Activated T-helper 1 cell treated with anti-CD3 and anti-CD28 coated beads, Interleukin-12 subunit alpha, Interleukin-12 subunit beta, Interleukin-2, Interleukin-4 antibody, amounts not matched to agents 30 ng/mL and 10 ng/mL and 1 ng/mL, durations not matched to agents 14 hours and 24 hours and 36 hours (primary cell): ENCODE measurements at regions of chr14 and their contacts with region 1.

Region 1: DNA sequence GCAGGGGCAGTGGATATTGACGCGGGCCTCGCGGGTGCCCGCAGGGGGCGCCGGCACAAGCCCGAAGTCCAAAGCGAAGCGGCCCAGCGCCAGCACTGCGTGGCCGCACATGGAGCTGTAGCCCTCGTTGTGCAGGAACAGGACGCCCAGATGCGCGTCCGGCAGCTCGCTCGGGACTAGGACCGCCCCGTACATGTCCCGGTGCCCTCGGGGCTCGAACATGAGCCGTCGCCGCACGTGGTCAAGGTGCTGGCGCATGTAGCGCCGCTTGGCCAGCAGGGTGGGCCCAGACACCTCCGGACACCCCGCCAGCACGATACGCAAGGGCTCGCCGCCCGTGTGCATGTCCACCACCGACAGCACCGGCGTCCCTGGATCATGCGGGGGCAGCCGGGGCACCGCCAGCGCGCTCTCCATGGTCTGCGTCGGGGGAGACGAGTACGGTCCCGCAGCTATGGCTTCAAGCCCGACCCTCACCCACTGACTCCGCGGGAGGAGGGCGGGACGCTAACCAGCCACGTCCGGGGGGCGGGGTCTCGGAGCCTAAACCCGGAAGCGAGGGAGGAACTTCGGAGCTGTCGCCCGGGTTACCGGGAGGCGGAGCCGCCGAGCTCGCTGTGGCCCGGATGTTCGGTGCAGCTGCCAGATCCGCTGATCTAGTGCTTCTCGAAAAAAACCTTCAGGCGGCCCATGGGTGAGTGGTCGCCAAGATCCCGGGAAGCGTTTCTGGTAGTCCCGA is at the starts of genes JKAMP and L3HYPDH:
- DNase-seq: peak; percentile 95
- H3K4me3 Mint-ChIP-seq: peak within 1 kb of the TSS; percentile 94
- H3K27ac Mint-ChIP-seq: peak within 1 kb of the TSS; percentile 90
- H3K4me1 Mint-ChIP-seq: peaks cover 61% of the 10 kb centered on the region
- H3K27me3 Mint-ChIP-seq: no peaks in the 10 kb centered on the region
- total RNA-seq, gene JKAMP: 27.6 and 28.8 TPM in 2 replicates
- total RNA-seq, gene L3HYPDH: 14.0 and 15.9 TPM in 2 replicates

Region 2: DNA sequence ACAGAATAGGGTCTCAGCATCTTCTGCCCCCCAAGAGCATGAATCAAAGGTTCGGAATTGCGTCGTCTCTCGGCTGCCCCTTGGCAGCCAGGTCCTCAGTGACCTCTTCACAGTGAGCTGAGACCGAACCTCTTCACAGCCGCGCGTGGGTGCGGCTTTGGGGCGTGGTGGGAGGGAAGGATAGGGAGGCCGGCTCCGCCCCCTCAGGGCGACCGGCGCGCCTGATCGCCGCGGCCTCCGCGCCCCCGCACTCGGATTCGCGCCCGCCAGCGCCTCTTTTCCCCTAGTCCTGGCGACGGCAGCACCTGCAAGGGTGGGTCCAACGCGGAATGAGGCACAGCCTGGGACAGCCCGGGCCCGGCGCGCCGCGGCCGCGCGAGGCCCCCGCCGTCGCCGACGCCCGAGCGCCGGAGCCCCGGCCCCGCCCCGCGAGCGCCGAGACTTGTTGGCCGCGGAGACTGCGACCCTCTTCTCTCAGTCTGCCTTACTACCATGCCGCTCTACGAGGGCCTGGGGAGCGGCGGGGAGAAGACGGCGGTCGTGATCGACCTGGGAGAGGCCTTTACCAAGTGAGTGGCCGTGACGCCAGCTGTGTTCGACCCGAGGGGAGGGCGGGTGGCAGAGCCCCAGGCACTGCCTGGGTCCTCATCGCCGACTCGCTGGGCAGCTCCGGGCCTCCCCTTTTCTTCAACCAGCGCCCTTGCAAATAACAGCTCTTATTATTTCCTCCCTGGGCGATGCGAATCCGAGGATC is 1284.2 kb before region 1 on chr14 and contains the start of gene ACTR10:
- intact Hi-C with region 1: loop called (anchors 2 kb)
- DNase-seq: peak; percentile 80
- H3K4me3 Mint-ChIP-seq: peak within 1 kb of the TSS; percentile 93
- H3K27ac Mint-ChIP-seq: peak within 1 kb of the TSS; percentile 86
- H3K4me1 Mint-ChIP-seq: peaks cover 24% of the 10 kb centered on the region
- H3K27me3 Mint-ChIP-seq: peaks cover 1% of the 10 kb centered on the region
- total RNA-seq, gene ACTR10: 38.3 and 40.3 TPM in 2 replicates

Region 3: DNA sequence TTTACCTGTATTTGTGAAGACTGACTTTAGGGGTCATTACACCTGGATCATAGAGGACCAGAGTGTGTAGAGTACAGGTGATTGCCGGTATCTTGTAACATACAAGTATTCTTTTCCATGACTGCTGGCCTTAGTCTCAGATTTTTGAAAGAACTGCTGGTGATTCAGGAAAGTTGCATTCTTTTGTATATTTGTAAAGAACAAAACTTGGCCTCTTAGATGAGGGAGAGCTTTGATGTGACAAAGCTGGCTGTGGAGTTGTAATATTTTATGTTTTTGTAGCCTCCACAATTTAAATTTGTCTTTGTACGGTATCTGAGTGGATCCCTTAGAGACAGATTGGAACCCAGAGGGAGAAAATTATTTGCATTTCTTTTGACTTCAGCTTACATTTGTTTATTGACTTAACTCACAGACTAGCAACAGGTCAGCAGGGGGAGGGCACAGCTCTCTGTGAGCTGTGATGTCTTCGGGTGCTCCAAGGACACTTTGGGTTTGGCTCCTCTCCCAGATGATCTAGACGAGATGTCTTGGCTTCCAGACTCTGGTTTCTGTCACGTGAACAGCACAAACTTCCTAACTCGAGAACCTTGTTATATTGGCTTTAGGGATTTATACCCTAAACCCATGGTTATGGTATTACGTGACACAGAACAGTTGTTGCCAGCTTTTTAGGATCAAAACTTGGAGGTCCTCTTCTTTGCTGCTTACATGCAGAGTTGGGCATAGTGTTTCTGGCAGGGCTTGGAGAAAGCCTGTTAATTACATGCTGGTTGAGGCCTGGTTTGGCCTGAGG is 229.7 kb before region 1 on chr14:
- intact Hi-C with region 1: no loop called
- DNase-seq: no peak
- H3K4me3 Mint-ChIP-seq: no peak overlapping the region
- H3K27ac Mint-ChIP-seq: no peak overlapping the region
- H3K4me1 Mint-ChIP-seq: no peaks in the 10 kb centered on the region
- H3K27me3 Mint-ChIP-seq: peaks cover 7% of the 10 kb centered on the region

Region 4: DNA sequence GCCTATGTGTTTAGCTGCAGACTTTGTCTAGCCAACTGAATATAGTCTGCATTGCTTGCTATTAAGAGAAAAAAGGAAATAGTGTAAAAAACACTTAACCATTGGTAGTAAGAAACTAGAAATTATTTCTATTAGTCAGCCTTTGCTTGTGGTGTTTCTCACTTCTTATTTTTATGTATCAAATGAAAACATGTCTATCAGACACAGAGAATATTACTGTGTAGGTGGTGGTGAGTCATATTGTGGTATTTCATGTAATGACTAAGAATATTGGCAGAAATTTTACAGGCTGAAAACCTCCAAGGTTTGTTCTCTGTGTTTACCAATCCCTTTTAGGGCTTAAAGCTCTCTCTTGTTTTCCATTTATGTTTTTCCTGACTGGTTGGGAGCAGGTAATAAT is 208.4 kb before region 1 on chr14:
- intact Hi-C with region 1: loop called (anchors 5 kb)
- DNase-seq: no peak
- H3K4me3 Mint-ChIP-seq: no peak overlapping the region
- H3K27ac Mint-ChIP-seq: no peak overlapping the region
- H3K4me1 Mint-ChIP-seq: peaks cover 23% of the 10 kb centered on the region
- H3K27me3 Mint-ChIP-seq: peaks cover 3% of the 10 kb centered on the region

Region 5: GRCh38 chr14:59464486-59465315 is 19.4 kb before region 1 on chr14:
- intact Hi-C with region 1: loop called (anchors 1 kb)
- DNase-seq: peak; percentile 43
- H3K4me3 Mint-ChIP-seq: peak overlapping the region; percentile 86
- H3K27ac Mint-ChIP-seq: peak overlapping the region; percentile 54
- H3K4me1 Mint-ChIP-seq: no peaks in the 10 kb centered on the region
- H3K27me3 Mint-ChIP-seq: peaks cover 10% of the 10 kb centered on the region

Region 6: DNA sequence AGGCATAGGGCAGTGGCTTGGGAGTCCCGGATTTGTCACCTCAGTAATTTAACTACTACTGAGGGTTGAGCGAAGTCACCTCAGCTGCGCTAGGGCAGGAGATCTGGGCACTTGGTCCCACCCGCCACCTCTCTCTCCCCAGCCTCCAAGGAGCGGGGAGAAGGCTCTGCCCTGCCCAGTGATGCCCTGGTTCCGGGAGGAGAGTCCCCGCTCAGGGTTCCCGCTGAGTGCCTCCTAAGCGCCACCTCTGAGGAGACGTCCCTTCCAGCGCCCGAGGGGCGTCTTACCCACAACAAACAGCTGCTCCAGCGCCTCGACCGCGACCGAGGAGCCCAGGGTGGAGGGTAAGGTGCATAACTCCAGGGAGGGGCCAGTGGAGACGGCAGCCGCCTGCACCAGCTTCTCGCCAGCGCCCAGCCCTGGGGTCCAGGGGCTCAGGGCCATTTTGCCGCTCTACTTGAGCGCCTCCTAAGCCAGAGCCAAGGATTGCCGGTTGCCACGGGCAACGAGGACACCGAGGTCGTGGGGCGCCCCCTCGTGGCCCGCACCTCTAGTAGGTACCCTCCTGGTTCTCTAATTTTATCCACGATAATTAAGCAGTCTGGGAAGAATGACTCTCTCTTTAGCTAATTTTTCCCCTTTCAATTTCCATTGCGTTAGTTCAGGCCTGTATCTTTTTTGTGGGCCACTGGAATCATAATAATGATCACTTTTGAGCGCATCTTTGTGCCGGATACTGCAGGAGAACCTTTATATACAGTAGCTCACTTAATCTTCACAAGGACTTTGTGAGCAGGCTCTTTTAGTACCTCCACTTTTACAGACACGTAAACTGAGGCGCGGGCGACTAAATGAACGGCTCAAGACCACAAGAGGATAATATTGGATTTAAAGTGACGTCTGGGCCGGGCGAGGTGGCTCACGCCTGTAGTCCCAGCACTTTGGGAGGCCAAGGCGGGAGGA is 92.5 kb after region 1 on chr14 and contains the start of gene CCDC175:
- intact Hi-C with region 1: loop called (anchors 1 kb)
- DNase-seq: peak; percentile 66
- H3K4me3 Mint-ChIP-seq: peak within 1 kb of the TSS; percentile 76
- H3K27ac Mint-ChIP-seq: no peak within 1 kb of the TSS
- H3K4me1 Mint-ChIP-seq: peaks cover 13% of the 10 kb centered on the region
- H3K27me3 Mint-ChIP-seq: peaks cover 27% of the 10 kb centered on the region
- total RNA-seq, gene CCDC175: not detected in 2 replicates